GM13976 (cell line): ENCODE measurements at regions of chr19 and their contacts with region 1.

Region 1: GRCh38 chr19:44570984-44571684 is 41.7 kb upstream of the CEACAM20 start:
- DNase-seq: peak; percentile 70
- CTCF ChIP-seq: peak; percentile 48

Region 2: DNA sequence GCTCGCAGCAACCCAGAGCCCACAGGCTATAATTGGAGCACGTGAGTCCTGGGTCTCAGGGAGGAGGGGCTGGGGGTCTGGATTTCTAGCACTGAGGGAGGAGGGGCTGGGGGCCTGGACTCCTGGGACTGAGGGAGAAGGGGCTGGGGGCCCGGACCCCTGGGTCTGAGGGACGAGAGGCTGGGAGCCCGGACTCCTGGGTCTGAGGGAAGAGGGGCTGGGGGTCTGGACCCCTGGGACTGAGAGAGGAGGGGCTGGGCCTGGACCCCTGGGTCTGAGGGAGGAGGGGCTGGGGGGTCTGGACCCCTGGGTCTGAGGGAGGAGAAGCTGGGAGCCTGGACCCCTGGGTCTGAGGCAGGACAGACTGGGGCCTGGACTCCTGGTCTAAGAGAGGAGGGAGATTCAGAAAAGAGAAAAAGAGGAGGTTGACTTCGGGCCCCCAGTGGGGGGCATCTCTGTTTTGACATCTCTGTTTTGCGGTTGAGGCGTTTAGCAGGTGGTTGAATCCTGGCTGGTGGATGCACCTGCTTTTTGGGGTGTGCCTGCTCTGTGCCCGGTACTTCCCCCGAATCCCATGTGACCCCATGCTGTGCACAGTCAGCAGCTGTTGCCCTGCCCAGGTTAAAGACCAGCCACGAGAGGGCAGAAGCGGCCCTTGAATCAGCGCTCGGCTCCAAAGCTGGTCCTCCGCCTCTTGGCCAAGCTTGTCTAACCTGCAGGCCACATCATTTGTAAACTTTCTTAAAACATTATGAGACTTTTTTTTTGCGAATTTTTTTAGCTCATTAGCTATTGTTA is 83.0 kb after region 1 on chr19:
- in situ Hi-C with region 1: loop called (anchors 10 kb)
- DNase-seq: peak; percentile 90
- CTCF ChIP-seq: peak; percentile 95